Heart left ventricle (tissue), 16 donors: ENCODE measurements at regions of chr11 and their contacts with region 1.

Region 1: GRCh38 chr11:86592659-86593451 is 79.6 kb downstream of the ME3 start:
- DNase-seq: peak in 4 of 5 donors; percentile 43 to 62 (median 48)
- ATAC-seq: peak; percentile 40 to 71 (median 57)
- H3K4me3 ChIP-seq: no peak overlapping the region
- H3K27ac ChIP-seq: peak overlapping the region in 2 of 12 donors; percentile 10 to 54
- H3K4me1 ChIP-seq: peaks cover 0 to 49% (median 32%) of the 10 kb centered on the region in 12 donors
- H3K27me3 ChIP-seq: no peaks in the 10 kb centered on the region
- CTCF ChIP-seq: no peak
- POLR2A ChIP-seq: no peak

Region 2: GRCh38 chr11:86456052-86456939 is 136.6 kb before region 1 on chr11:
- intact Hi-C with region 1: loop called in 1 of 10 experiments (anchors 10 kb)
- DNase-seq: peak; percentile 82 to 86 (median 85)
- ATAC-seq: peak; percentile 47 to 83 (median 78)
- H3K4me3 ChIP-seq: no peak overlapping the region
- H3K27ac ChIP-seq: peak overlapping the region in 6 of 12 donors; percentile 20 to 61 (median 39)
- H3K4me1 ChIP-seq: peaks cover 3 to 55% (median 37%) of the 10 kb centered on the region in 12 donors
- H3K27me3 ChIP-seq: no peaks in the 10 kb centered on the region
- CTCF ChIP-seq: peak; percentile 83 to 97 (median 91)
- POLR2A ChIP-seq: no peak

Region 3: DNA sequence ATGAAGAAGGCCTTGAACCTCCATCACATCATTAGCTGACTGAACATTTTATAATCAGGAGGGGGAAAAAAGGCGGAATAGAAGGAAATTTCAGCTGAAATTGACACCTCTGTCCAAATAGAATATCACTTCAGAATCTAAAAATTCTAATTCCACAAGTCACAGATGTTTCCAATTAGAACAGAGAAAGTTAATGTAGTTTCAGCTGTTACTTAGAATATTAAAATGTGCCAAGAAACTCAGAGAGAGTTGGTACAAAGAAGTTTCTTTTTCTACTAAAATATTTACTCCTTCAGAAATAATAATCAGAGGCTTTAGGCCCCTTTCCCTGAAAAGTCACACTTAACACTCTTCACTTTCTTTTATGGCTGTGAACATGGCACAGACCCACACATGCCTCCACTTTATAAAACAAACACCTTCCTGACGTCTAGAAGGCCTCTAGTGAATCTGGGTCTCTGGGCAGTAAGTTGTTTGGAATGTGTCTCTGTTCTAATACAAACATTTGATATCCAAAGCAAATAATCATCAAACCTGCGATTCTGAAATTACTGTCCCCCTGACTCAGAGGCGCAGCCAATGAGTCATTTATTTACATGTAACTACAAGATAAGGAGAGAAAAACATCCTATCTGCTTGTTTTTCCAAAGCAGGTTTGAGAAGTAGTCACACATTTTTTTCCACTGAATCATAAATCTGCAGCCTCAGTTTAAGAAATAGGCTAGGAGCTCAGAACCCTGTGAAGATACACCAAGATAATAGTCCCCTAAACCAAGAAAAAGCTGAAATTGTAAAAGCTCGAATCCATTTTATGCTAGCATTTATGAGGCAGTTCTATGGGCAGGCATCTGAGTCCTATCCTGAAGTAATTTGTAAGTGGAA is 68.9 kb before region 1 on chr11:
- intact Hi-C with region 1: loop called in 1 of 10 experiments (anchors 10 kb)
- DNase-seq: no peak
- ATAC-seq: peak; percentile 38 to 85 (median 48)
- H3K4me3 ChIP-seq: no peak overlapping the region
- H3K27ac ChIP-seq: peak overlapping the region in 9 of 12 donors; percentile 0 to 55 (median 27)
- H3K4me1 ChIP-seq: peaks cover 0 to 37% (median 20%) of the 10 kb centered on the region in 12 donors
- H3K27me3 ChIP-seq: no peaks in the 10 kb centered on the region
- CTCF ChIP-seq: no peak
- POLR2A ChIP-seq: no peak

Region 4: DNA sequence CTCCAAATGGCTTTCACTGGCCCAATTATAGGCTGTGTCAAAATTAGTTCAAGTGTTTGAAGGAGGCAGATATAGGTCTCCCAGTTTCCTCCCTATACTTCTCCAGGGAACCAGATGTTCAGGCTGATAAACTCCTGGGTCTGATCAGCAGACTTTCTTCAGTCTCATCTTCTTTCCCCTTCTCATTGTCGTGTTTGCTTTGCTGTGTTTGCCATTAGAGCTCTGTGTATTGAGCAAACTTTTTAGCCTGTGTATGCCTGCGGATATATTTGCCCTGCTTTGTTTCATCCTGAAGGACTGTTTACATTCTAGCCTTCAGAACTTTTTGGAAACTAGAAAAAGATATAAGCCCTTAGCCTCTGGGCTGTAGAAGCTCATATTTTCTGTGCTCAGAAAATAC is 113.5 kb after region 1 on chr11:
- intact Hi-C with region 1: no loop called
- DNase-seq: no peak
- ATAC-seq: no peak
- H3K4me3 ChIP-seq: no peak overlapping the region
- H3K27ac ChIP-seq: peak overlapping the region in 1 of 12 donors; percentile 60
- H3K4me1 ChIP-seq: no peaks in the 10 kb centered on the region
- H3K27me3 ChIP-seq: no peaks in the 10 kb centered on the region
- CTCF ChIP-seq: no peak
- POLR2A ChIP-seq: no peak